Mammary epithelial cell (primary cell): ENCODE measurements at regions of chrX and their contacts with region 1.

Region 1: GRCh38 chrX:70998411-70999027 is 67.6 kb upstream of the SLC7A3 start:
- DNase-seq: peak; percentile 84
- H3K4me3 ChIP-seq: no peak overlapping the region
- H3K27ac ChIP-seq: no peak overlapping the region
- H3K4me1 ChIP-seq: no peaks in the 10 kb centered on the region
- H3K27me3 ChIP-seq: no peaks in the 10 kb centered on the region
- CTCF ChIP-seq: peak; percentile 21 to 48

Region 2: DNA sequence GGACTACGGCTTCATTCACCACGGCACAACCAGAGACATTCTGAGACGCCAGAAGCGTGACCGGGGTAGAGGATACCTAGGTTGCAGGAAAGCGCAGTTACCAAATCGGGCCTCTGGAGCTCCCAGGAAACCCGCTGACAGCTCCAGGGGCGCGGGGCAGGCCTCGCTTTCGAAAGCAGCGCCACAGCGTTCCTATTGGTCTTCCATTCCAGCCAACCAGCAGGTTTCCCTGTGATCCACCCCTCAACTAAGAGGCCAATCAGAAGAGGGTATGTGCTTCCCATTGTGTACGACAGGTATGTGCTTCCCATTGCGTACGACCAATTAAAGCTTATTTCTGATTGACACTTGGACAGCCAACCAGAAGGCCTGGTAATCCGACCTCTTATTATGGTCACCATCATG is 54.7 kb after region 1 on chrX:
- CTCF ChIA-PET with region 1: no interaction called
- dilution Hi-C with region 1: loop called (anchors 5 kb)
- in situ Hi-C with region 1: no loop called
- intact Hi-C with region 1: no loop called
- DNase-seq: no peak
- H3K4me3 ChIP-seq: no peak overlapping the region
- H3K27ac ChIP-seq: no peak overlapping the region
- H3K4me1 ChIP-seq: no peaks in the 10 kb centered on the region
- H3K27me3 ChIP-seq: no peaks in the 10 kb centered on the region
- CTCF ChIP-seq: no peak